MCF 10A (cell line): ENCODE measurements at regions of chr5 and their contacts with region 1.

Region 1: GRCh38 chr5:172984243-172984953 is 827 bp downstream of the ATP6V0E1 start:
- DNase-seq: peak; percentile 96
- H3K4me3 Mint-ChIP-seq: peak overlapping the region; percentile 94
- H3K27ac Mint-ChIP-seq: peak overlapping the region; percentile 91
- H3K4me1 Mint-ChIP-seq: peaks cover 6% of the 10 kb centered on the region
- H3K27me3 Mint-ChIP-seq: no peaks in the 10 kb centered on the region
- CTCF ChIP-seq: peak; percentile 43

Region 2: GRCh38 chr5:172833686-172834414 is 150.5 kb before region 1 on chr5 and contains the start of gene ERGIC1:
- CTCF ChIA-PET with region 1: no interaction called
- POLR2A ChIA-PET with region 1: no interaction called
- intact Hi-C with region 1: no loop called
- DNase-seq: peak; percentile 91
- H3K4me3 Mint-ChIP-seq: peak within 1 kb of the TSS; percentile 87
- H3K27ac Mint-ChIP-seq: peak within 1 kb of the TSS; percentile 88
- H3K4me1 Mint-ChIP-seq: peaks cover 40% of the 10 kb centered on the region
- H3K27me3 Mint-ChIP-seq: no peaks in the 10 kb centered on the region
- CTCF ChIP-seq: peak; percentile 26
- total RNA-seq, gene ERGIC1: 257 and 292 TPM in 2 replicates

Region 3: GRCh38 chr5:172939071-172939470 is 45.3 kb before region 1 on chr5:
- CTCF ChIA-PET with region 1: no interaction called
- POLR2A ChIA-PET with region 1: no interaction called
- intact Hi-C with region 1: no loop called
- DNase-seq: peak; percentile 40
- H3K4me3 Mint-ChIP-seq: no peak overlapping the region
- H3K27ac Mint-ChIP-seq: no peak overlapping the region
- H3K4me1 Mint-ChIP-seq: no peaks in the 10 kb centered on the region
- H3K27me3 Mint-ChIP-seq: no peaks in the 10 kb centered on the region
- CTCF ChIP-seq: peak; percentile 52

Region 4: DNA sequence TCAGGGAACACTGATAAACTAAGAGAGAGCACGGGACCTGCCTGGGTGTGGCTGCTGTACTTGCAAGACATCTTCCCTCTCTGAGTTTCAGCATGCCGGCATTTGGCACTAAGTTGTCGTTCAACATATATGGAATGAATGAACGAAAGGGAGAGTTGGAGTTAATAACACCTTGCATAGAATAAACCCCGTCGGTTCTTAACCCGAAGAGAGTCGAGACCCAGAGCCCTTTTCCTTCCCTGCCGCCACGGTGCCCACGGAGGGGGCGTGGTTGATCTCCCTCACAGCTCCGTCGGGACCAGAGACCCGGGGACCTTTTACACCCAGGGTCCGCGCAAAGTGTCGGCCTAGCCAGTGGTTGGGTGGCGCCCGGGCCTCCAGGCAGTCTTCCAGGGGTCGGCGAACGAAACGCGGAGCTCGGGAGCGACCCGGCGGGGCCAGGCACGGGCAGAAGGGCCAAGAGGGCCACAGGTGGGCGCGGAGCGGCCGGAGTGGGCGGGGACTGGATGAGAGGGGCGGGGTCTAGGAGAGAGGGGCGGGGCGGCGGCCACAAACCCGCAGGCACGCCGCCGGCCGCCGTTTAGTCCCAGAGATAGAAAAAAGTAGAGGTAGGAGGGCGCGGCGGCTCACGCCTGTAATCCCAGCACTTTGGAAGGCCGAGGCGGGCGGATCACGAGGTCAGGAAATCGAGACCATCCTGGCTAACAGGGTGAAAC is 25.9 kb before region 1 on chr5:
- CTCF ChIA-PET with region 1: interaction called, 10 read pairs
- POLR2A ChIA-PET with region 1: interaction called, 49 read pairs
- intact Hi-C with region 1: no loop called
- DNase-seq: peak; percentile 80
- H3K4me3 Mint-ChIP-seq: peak overlapping the region; percentile 94
- H3K27ac Mint-ChIP-seq: peak overlapping the region; percentile 98
- H3K4me1 Mint-ChIP-seq: peaks cover 49% of the 10 kb centered on the region
- H3K27me3 Mint-ChIP-seq: no peaks in the 10 kb centered on the region
- CTCF ChIP-seq: no peak

Region 5: DNA sequence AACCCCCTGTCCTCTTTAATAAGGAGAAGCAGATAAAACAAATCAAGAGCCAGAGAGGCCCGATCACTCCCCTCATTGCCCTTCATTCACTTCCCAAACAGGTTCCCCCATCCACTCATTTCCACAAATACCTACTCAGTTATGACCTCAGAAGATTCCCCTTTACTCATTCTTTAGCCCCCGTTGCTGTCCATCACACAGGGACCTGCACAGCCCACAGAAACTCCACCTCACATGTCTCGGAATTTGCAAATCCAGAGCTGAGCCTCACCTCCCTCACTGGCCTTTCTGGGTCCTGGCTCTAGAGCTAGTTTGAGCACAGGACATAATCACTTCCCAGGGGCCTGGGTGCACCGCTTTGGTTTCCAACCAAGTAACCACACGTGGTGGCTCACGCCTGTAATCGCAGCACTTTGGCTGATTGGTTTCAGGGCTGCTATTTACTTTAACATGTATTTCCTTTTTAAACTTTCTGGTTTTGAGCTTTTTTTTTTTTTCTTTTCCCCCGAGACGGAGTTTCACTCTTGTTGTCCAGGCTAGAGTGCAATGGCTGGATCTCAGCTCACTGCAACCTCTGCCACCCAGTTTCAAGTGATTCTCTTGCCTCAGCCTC is 16.9 kb after region 1 on chr5:
- CTCF ChIA-PET with region 1: interaction called, 4 read pairs
- POLR2A ChIA-PET with region 1: interaction called, 41 read pairs
- intact Hi-C with region 1: no loop called
- DNase-seq: no peak
- H3K4me3 Mint-ChIP-seq: no peak overlapping the region
- H3K27ac Mint-ChIP-seq: no peak overlapping the region
- H3K4me1 Mint-ChIP-seq: peaks cover 29% of the 10 kb centered on the region
- H3K27me3 Mint-ChIP-seq: no peaks in the 10 kb centered on the region
- CTCF ChIP-seq: no peak

Region 6: GRCh38 chr5:173035904-173036707 is 51.7 kb after region 1 on chr5:
- CTCF ChIA-PET with region 1: interaction called, 4 read pairs
- POLR2A ChIA-PET with region 1: interaction called, 10 read pairs
- intact Hi-C with region 1: no loop called
- DNase-seq: peak; percentile 43
- H3K4me3 Mint-ChIP-seq: no peak overlapping the region
- H3K27ac Mint-ChIP-seq: peak overlapping the region; percentile 65
- H3K4me1 Mint-ChIP-seq: peaks cover 11% of the 10 kb centered on the region
- H3K27me3 Mint-ChIP-seq: no peaks in the 10 kb centered on the region
- CTCF ChIP-seq: no peak

Region 7: GRCh38 chr5:173090639-173091038 is 106.2 kb after region 1 on chr5:
- CTCF ChIA-PET with region 1: no interaction called
- POLR2A ChIA-PET with region 1: interaction called, 10 read pairs
- intact Hi-C with region 1: no loop called
- DNase-seq: no peak
- H3K4me3 Mint-ChIP-seq: no peak overlapping the region
- H3K27ac Mint-ChIP-seq: no peak overlapping the region
- H3K4me1 Mint-ChIP-seq: peaks cover 19% of the 10 kb centered on the region
- H3K27me3 Mint-ChIP-seq: no peaks in the 10 kb centered on the region
- CTCF ChIP-seq: no peak

Region 8: GRCh38 chr5:173331956-173332479 is 347.6 kb after region 1 on chr5:
- CTCF ChIA-PET with region 1: interaction called, 3 read pairs
- POLR2A ChIA-PET with region 1: interaction called, 26 read pairs
- intact Hi-C with region 1: loop called (anchors 1 kb)
- DNase-seq: peak; percentile 96
- H3K4me3 Mint-ChIP-seq: no peak overlapping the region
- H3K27ac Mint-ChIP-seq: peak overlapping the region; percentile 26
- H3K4me1 Mint-ChIP-seq: peaks cover 45% of the 10 kb centered on the region
- H3K27me3 Mint-ChIP-seq: no peaks in the 10 kb centered on the region
- CTCF ChIP-seq: peak; percentile 96